Calu3 (cell line): ENCODE measurements at regions of chr2 and their contacts with region 1.

Region 1: DNA sequence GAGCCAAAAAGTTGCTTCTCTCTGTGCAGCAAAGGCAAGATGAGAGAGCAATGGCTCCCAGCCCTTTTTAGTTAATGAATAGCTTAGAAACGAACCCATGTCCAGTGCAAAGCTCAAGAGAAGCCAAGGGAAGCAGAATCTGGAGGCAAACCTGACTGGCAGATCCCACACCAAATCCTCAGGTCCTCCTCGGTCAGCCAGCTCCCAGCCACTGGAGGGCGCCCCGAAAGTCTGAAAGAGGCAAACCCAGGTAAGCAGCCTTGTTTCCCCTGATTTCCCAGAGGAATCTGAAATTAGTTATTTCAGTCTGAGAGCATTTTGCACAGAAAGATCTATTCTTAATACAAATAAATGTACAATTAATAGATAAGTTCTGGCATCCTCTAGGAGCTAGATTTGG is 71.3 kb upstream of the PID1 start:
- DNase-seq: peak; percentile 85
- H3K4me3 Mint-ChIP-seq: no peak overlapping the region
- H3K27ac Mint-ChIP-seq: no peak overlapping the region
- H3K4me1 Mint-ChIP-seq: peaks cover 12% of the 10 kb centered on the region
- H3K27me3 Mint-ChIP-seq: no peaks in the 10 kb centered on the region
- CTCF ChIP-seq: peak; percentile 64

Region 2: DNA sequence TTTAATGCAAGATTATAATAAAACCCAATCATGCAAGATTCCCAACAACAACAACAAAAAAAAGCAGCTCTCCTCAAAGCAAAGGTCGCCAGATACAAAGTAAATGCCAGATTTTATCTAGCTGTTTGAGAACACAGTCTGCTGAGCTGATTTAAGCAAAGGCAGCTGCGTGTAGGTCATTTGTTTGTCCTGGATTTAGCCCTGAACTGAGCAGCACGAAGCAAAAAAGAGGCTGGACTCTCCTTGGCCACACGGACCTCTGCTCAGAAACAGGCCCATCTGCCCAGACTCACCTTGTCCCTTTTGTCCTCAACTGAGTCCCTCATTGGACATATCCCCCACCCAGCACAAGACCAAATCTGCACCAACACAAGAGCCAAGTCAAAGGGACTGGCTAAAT is 162.7 kb before region 1 on chr2:
- CTCF ChIA-PET with region 1: no interaction called
- intact Hi-C with region 1: no loop called
- DNase-seq: no peak
- H3K4me3 Mint-ChIP-seq: no peak overlapping the region
- H3K27ac Mint-ChIP-seq: no peak overlapping the region
- H3K4me1 Mint-ChIP-seq: no peaks in the 10 kb centered on the region
- H3K27me3 Mint-ChIP-seq: no peaks in the 10 kb centered on the region
- CTCF ChIP-seq: no peak

Region 3: GRCh38 chr2:229282758-229283546 is 59.4 kb before region 1 on chr2:
- CTCF ChIA-PET with region 1: no interaction called
- intact Hi-C with region 1: no loop called
- DNase-seq: no peak
- H3K4me3 Mint-ChIP-seq: no peak overlapping the region
- H3K27ac Mint-ChIP-seq: no peak overlapping the region
- H3K4me1 Mint-ChIP-seq: no peaks in the 10 kb centered on the region
- H3K27me3 Mint-ChIP-seq: no peaks in the 10 kb centered on the region
- CTCF ChIP-seq: no peak

Region 4: GRCh38 chr2:229431327-229431954 is 89.1 kb after region 1 on chr2:
- CTCF ChIA-PET with region 1: no interaction called
- intact Hi-C with region 1: loop called (anchors 2 kb)
- DNase-seq: no peak
- H3K4me3 Mint-ChIP-seq: no peak overlapping the region
- H3K27ac Mint-ChIP-seq: no peak overlapping the region
- H3K4me1 Mint-ChIP-seq: peaks cover 5% of the 10 kb centered on the region
- H3K27me3 Mint-ChIP-seq: no peaks in the 10 kb centered on the region
- CTCF ChIP-seq: peak; percentile 19

Region 5: DNA sequence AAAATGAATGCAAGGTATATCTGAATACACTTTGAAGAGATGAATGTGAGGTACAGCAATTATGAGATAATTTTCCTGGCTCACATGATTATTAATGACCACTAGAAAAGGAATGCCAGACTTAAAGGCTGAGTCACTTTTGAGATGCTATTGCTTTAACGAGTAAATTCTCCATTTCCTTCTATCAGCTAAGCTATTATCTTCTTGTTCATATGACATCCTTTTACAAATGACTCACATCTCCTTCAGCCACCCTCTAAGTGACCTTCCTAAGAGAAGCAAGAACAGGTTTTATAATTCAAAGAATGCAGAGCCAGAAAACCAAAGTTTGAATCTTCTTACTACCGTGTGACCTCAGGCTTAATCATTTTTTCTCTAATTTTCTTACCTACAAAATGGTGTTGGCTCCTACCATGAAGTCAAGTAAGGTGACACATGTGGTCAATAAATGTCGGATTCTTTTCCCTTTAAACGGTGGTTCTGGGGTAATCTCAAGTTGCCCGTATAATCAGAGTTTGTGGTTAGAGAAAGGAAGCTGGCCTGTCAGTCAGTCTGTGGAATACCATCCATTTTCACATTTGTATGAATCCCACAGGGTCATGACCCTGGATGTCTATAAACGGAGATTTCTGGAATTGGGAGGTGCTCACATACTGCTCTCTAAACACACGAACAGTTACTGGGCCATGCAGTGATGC is 112.7 kb after region 1 on chr2:
- CTCF ChIA-PET with region 1: no interaction called
- intact Hi-C with region 1: loop called (anchors 2 kb)
- DNase-seq: no peak
- H3K4me3 Mint-ChIP-seq: no peak overlapping the region
- H3K27ac Mint-ChIP-seq: peak overlapping the region; percentile 2
- H3K4me1 Mint-ChIP-seq: peaks cover 8% of the 10 kb centered on the region
- H3K27me3 Mint-ChIP-seq: no peaks in the 10 kb centered on the region
- CTCF ChIP-seq: no peak

Region 6: DNA sequence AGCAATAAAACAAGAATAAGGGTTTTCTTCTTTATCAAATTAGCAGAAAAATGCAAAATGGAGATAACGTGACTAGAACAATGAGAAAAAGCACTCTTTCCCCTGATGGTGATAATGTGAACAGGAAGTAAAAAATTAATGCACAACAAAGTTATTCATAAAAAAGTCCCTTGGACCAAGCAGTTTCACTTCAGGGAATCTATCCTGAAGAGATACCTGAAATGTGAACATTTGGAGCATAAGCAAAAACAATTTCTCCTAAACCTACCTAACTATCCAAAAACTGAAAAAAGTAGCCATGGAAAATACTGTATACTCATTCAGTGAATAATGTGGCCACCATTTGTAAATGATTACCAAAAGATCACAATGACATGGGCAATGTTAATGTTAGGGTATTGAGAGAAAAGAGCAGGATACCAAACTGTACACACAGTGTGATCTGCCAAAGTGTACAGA is 530.8 kb after region 1 on chr2:
- CTCF ChIA-PET with region 1: no interaction called
- intact Hi-C with region 1: no loop called
- DNase-seq: no peak
- H3K4me3 Mint-ChIP-seq: no peak overlapping the region
- H3K27ac Mint-ChIP-seq: peak overlapping the region; percentile 57
- H3K4me1 Mint-ChIP-seq: peaks cover 21% of the 10 kb centered on the region
- H3K27me3 Mint-ChIP-seq: no peaks in the 10 kb centered on the region
- CTCF ChIP-seq: no peak